ENCODE measurements at regions of chr20 and their contacts with region 1.

Region 1: DNA sequence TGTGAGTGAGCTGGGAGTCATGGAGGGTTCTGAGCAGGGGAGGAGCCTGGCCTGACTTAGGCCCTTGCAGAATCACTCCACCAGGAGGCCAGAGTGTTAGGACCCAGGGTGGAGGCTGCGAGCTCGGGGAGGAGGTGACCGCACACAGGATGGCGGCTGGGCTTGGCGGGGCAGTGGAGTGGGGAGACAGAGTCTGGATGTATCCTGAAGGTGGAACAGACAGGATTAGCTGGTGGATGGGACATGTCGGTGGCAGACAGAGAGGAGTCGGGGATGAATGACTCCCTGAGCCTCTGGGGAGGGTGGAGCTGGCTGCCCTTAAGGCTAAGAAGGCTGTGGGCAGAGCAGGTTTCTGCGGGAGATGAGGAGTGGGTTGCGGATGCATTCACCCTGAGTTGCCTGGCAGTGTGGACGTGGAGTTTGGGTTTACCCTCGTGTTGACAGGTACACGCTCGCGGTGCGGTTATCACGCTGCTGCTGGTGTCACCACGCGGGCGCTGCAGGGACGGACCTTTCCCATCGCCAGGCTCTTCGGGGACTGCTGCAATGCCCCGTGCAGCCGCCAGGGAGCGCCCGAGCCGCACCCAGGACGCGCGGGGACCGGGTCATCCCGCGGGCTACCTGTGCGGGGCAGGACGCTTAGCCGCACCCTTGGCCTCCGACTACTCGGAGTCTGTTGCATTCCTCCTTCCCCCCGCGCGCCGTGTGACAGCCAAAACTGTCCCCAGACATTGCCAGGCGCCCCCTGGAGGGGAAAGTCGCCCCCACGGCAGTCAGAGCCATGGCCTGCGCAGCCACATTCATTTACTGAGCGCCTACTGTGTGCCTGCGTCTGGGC is 43.0 kb upstream of the PTGIS start:
- DNase-seq: peak; percentile 51 to 67 (median 60)
- H3K4me3 ChIP-seq: peak overlapping the region in 1 of 3 experiments; percentile 44
- H3K4me3 Mint-ChIP-seq: peak overlapping the region; percentile 74 to 87
- H3K27ac ChIP-seq: no peak overlapping the region
- H3K27ac Mint-ChIP-seq: peak overlapping the region in 1 of 7 donors; percentile 79
- H3K4me1 ChIP-seq: peaks cover 9 to 15% of the 10 kb centered on the region in 2 donors
- H3K4me1 Mint-ChIP-seq: peaks cover 12% of the 10 kb centered on the region
- H3K27me3 ChIP-seq: peaks cover 0 to 7% of the 10 kb centered on the region in 2 donors
- H3K27me3 Mint-ChIP-seq: peaks cover 8 to 13% (median 12%) of the 10 kb centered on the region in 3 donors
- CTCF ChIP-seq: peak; percentile 99

Region 2: DNA sequence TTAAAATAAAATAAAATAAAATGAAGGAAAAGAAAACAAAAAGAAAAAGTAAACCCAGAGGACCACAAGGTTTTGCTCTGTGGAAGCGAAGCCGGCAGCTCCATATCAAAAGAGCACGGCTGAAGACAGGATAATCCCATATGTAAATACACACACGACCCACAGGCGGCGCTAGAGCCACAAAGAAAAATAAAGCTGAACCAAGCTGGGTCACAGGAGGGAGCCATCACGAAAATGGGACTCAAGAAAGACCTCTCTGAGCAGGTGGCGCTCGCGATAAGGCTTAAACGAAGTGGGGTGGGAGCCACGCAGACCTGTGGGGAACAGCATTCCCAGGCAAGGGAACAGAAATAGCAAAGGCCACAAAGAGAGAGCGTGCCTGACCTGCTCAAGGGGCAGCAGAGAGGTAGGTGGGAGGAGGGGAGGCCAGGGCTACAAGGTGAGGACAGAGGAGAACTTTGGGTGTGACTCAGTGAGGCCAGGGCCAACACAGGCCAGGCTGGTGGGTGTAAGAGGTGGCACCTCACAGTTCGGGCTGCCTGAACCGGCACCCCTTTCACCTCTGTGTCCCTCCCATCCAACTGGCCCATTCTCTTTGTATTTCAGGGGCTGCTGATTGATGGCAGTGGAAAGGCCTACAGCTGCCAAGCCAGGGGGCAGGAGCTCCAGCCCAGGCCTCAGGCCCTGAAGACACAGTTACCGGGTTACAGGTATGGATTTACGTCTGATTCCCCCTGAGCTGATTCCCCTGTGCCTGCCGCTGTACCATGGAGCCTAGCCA is 69.0 kb before region 1 on chr20:
- intact Hi-C with region 1: loop called (anchors 1 to 5 kb)
- DNase-seq: peak; percentile 46 to 56 (median 53)
- H3K4me3 ChIP-seq: no peak overlapping the region
- H3K4me3 Mint-ChIP-seq: no peak overlapping the region
- H3K27ac ChIP-seq: no peak overlapping the region
- H3K27ac Mint-ChIP-seq: peak overlapping the region in 3 of 7 donors; percentile 8 to 60 (median 8)
- H3K4me1 ChIP-seq: no peaks in the 10 kb centered on the region
- H3K4me1 Mint-ChIP-seq: no peaks in the 10 kb centered on the region
- H3K27me3 ChIP-seq: no peaks in the 10 kb centered on the region
- H3K27me3 Mint-ChIP-seq: peaks cover 6 to 11% (median 8%) of the 10 kb centered on the region in 3 donors
- CTCF ChIP-seq: peak; percentile 90

Region 3: GRCh38 chr20:49562311-49563014 is 48.5 kb before region 1 on chr20:
- intact Hi-C with region 1: no loop called
- DNase-seq: no peak
- H3K4me3 ChIP-seq: no peak overlapping the region
- H3K4me3 Mint-ChIP-seq: no peak overlapping the region
- H3K27ac ChIP-seq: no peak overlapping the region
- H3K27ac Mint-ChIP-seq: no peak overlapping the region
- H3K4me1 ChIP-seq: no peaks in the 10 kb centered on the region
- H3K4me1 Mint-ChIP-seq: no peaks in the 10 kb centered on the region
- H3K27me3 ChIP-seq: peaks cover 17 to 29% of the 10 kb centered on the region in 2 donors
- H3K27me3 Mint-ChIP-seq: peaks cover 35 to 47% (median 43%) of the 10 kb centered on the region in 3 donors
- CTCF ChIP-seq: no peak

Region 4: DNA sequence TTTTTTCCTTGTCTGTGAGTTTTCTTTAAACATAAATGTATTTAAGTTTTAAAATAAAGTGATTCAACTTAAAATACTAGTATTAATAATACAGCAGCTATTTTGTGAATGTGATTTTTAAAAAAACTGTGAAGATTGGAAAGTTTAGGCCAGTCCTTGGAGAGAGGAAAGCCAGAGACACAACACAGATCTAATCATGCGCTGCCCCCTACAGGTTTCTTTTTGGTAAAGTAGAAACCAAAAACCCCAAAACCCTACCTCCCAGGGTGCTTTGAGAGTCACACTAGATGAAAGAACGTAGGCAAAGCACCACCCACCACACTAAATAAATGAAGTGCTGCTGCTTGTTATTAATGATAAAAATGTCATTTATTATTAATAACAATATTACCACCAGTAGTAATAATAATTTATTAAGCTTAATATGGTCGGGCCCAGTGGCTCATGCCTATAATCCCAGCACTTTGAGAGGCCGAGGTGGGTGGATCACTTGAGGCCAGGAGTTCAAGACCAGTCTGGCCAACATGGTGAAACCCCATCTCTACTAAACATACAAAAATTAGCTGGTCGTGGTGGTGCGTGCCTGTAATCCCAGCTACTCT is 235.4 kb after region 1 on chr20:
- intact Hi-C with region 1: loop called (anchors 1 to 2 kb)
- DNase-seq: peak; percentile 34 to 67 (median 54)
- H3K4me3 ChIP-seq: no peak overlapping the region
- H3K4me3 Mint-ChIP-seq: no peak overlapping the region
- H3K27ac ChIP-seq: no peak overlapping the region
- H3K27ac Mint-ChIP-seq: no peak overlapping the region
- H3K4me1 ChIP-seq: peaks cover 3 to 7% of the 10 kb centered on the region in 2 donors
- H3K4me1 Mint-ChIP-seq: peaks cover 13% of the 10 kb centered on the region
- H3K27me3 ChIP-seq: no peaks in the 10 kb centered on the region
- H3K27me3 Mint-ChIP-seq: no peaks in the 10 kb centered on the region
- CTCF ChIP-seq: peak; percentile 80

Region 5: DNA sequence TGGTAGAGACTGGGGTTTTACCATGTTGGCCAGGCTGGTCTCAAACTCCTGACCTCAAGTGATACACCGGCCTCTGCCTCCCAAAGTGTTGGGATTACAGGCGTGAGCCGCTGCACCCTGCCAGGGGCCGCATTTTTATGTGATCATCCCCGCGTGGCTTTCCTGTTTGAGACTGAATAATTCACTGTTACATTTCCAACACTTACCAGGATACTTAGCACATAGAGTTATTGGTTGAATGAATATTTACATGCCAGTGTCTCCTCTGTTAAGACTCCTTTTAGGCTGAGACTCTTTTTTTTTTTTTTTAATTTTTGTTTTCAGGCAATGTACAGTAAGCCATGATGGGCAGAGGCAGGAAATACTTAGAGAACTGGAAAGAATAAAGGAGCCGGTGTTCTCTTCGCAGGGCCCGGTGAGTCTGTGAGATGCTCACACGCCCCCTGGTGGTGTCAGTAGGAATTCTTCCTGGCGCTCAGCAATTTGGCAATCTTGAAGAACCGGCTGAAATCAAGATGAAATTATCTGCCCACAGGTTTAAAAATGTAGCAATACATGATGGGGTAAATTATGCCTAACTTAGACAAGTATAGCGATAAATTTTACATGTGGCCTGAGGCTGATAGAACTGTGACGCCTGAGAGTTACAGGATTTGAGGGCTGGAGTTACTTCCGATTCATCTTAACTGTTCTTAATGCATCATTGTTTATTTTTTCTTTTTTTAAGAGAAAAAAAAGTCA is 317.7 kb after region 1 on chr20:
- intact Hi-C with region 1: loop called in 1 of 2 experiments (anchors 5 kb)
- DNase-seq: peak; percentile 65 to 77 (median 77)
- H3K4me3 ChIP-seq: no peak overlapping the region
- H3K4me3 Mint-ChIP-seq: no peak overlapping the region
- H3K27ac ChIP-seq: no peak overlapping the region
- H3K27ac Mint-ChIP-seq: peak overlapping the region in 3 of 7 donors; percentile 63 to 72 (median 72)
- H3K4me1 ChIP-seq: peaks cover 10 to 20% of the 10 kb centered on the region in 2 donors
- H3K4me1 Mint-ChIP-seq: peaks cover 12% of the 10 kb centered on the region
- H3K27me3 ChIP-seq: no peaks in the 10 kb centered on the region
- H3K27me3 Mint-ChIP-seq: no peaks in the 10 kb centered on the region
- CTCF ChIP-seq: peak; percentile 87